Posterior cingulate gyrus (tissue), 11 donors: ENCODE measurements at regions of chr2 and their contacts with region 1.

Region 1: GRCh38 chr2:36322108-36322507 is 33.5 kb upstream of the CRIM1 start:
- DNase-seq: peak in 2 of 10 donors; percentile 9 to 35

Region 2: GRCh38 chr2:35973132-35973736 is 348.9 kb before region 1 on chr2:
- intact Hi-C with region 1: loop called (anchors 10 kb)
- DNase-seq: peak in 1 of 10 donors; percentile 16

Region 3: GRCh38 chr2:36912695-36913094 is 590.6 kb after region 1 on chr2:
- intact Hi-C with region 1: no loop called
- DNase-seq: no peak